ENCODE measurements at regions of chr1 and their contacts with region 1.

Region 1: DNA sequence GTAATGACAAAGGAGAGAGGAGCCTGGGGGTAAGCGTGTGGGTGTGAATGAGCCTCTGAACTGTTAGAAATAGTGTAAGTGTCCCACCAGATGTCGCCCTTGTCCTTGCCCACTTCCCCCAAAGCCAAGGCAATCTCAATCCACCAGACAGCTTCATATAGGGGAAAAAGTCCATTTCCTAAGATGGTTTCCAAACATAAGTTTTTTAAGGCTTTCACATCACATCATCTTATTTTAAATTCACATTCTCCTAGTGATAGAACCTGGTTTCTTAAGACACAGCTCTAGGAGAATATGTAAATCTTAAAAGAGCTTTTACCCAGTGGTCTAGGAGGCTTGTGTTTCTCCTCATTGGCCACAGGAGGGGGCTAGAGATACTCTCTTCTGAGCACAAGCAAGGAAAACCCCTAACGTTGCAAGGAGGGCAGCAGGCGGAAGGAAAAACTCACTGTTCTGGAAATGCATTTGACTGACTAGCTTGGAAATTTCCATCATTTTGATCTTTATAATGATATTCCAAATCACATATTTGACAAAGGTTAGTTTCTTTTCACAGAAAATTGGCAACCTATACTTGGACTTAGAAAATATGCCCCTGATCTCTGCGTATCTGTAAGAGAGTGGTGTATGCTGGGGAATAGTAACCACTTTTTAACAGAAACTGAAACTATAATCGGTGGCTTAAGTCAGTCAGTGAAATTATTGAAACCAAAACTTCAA is 51.9 kb upstream of the LPAR3 start:
- DNase-seq: peak; percentile 85
- H3K4me3 ChIP-seq: peak overlapping the region; percentile 19 to 51 (median 45)
- H3K27ac ChIP-seq: peak overlapping the region; percentile 63 to 78 (median 72)
- H3K4me1 ChIP-seq: peaks cover 0 to 14% (median 13%) of the 10 kb centered on the region in 4 donors
- H3K27me3 ChIP-seq: no peaks in the 10 kb centered on the region
- CTCF ChIP-seq: peak; percentile 80 to 89 (median 85)
- EP300 ChIP-seq: no peak
- POLR2A ChIP-seq: no peak

Region 2: DNA sequence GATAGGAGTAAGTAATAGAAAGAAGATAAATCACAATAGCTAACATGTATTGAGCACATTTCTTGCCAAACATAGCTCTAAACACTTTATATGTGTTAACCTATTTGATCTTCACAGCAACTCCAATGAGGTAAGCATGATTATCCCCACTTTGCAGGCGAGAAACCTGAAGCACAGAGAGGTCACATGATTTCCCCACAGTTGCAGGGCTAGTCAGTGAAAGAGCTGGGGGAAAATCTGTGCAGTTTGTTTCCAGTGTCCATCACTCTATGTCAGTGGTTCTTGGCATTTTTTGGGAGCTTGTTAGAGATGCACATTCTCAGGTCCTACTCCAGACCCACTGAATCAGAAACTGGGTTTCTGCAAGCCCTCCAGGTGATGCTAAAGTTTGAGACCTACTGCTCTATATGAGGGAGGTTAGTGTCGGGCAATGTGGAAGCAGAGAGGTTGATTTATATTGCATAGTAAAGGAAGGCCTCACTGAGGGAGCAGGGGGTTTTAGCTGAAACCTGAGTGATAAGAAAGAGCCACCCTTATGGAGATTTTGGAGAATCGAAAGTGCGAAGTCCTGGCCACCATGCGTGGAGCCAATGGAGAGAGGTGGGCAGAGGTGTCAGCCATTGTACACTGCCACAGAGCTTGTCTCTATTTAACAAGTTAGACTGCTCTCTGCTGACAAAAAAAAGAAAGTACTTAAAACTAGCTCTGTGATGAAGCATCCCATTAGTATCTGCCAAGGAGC is 82.5 kb after region 1 on chr1:
- intact Hi-C with region 1: loop called (anchors 2 kb)
- DNase-seq: no peak
- H3K4me3 ChIP-seq: no peak overlapping the region
- H3K27ac ChIP-seq: no peak overlapping the region
- H3K4me1 ChIP-seq: no peaks in the 10 kb centered on the region
- H3K27me3 ChIP-seq: no peaks in the 10 kb centered on the region
- CTCF ChIP-seq: peak in 1 of 4 experiments; percentile 14
- EP300 ChIP-seq: no peak
- POLR2A ChIP-seq: no peak

Region 3: GRCh38 chr1:85259118-85259911 is 314.4 kb after region 1 on chr1 and contains the start of gene C1orf52:
- intact Hi-C with region 1: loop called (anchors 2 kb)
- DNase-seq: peak; percentile 97
- H3K4me3 ChIP-seq: peak within 1 kb of the TSS; percentile 69 to 94 (median 88)
- H3K27ac ChIP-seq: peak within 1 kb of the TSS; percentile 76 to 89 (median 84)
- H3K4me1 ChIP-seq: peaks cover 0 to 49% (median 35%) of the 10 kb centered on the region in 4 donors
- H3K27me3 ChIP-seq: no peaks in the 10 kb centered on the region
- CTCF ChIP-seq: peak; percentile 92 to 100 (median 97)
- EP300 ChIP-seq: no peak
- POLR2A ChIP-seq: peak; percentile 57 to 67
- total RNA-seq, gene C1orf52: 8.9 to 31.1 (median 19.4) TPM

Region 4: GRCh38 chr1:85576642-85577418 is 631.9 kb after region 1 on chr1:
- intact Hi-C with region 1: loop called (anchors 10 kb)
- DNase-seq: peak; percentile 96
- H3K4me3 ChIP-seq: peak overlapping the region; percentile 67 to 84 (median 75)
- H3K27ac ChIP-seq: peak overlapping the region; percentile 96 to 99 (median 98)
- H3K4me1 ChIP-seq: peaks cover 0 to 42% (median 31%) of the 10 kb centered on the region in 4 donors
- H3K27me3 ChIP-seq: no peaks in the 10 kb centered on the region
- CTCF ChIP-seq: peak in 3 of 4 experiments; percentile 17 to 88 (median 85)
- EP300 ChIP-seq: peak in 1 of 4 donors; percentile 36
- POLR2A ChIP-seq: peak; percentile 40 to 77